Heart right ventricle (tissue), 16 donors: ENCODE measurements at regions of chr13 and their contacts with region 1.

Region 1: DNA sequence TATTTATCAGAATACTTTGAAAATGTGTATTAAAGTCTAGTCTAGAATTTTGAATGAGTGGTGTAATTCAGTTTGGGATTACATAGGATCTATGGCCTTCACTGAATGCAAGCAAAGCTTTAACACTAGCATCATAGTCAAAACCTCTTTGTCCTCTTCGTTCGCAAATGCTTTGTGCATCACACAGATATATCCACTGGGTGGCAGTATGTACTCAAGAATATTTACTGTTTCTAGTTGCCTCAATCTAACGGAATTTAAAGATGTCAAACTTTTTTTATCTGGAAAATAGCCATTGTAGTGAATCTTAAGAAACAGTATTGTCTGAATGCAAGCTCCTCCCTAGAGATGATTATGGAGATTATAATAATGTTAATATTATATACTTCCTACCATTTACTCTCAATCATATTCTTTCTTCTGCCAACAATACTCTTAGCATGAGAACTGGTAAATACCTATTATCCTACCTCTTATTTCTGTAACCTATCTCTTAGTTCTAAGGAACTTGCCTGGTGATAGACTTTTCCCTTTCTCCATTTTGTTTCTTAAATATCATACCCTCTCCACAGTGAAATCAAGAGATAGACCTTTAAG is 25.8 kb downstream of the LACC1 start:
- DNase-seq: peak in 1 of 2 donors; percentile 42
- ATAC-seq: peak in 6 of 8 donors; percentile 63 to 78 (median 68)
- H3K4me3 ChIP-seq: no peak overlapping the region
- H3K27ac ChIP-seq: no peak overlapping the region
- H3K4me1 ChIP-seq: peaks cover 0 to 17% (median 5%) of the 10 kb centered on the region in 9 donors
- H3K27me3 ChIP-seq: peaks cover 0 to 18% (median 0%) of the 10 kb centered on the region in 7 donors
- CTCF ChIP-seq: peak; percentile 65 to 90 (median 81)

Region 2: GRCh38 chr13:43953370-43953769 is 47.8 kb after region 1 on chr13:
- intact Hi-C with region 1: no loop called
- DNase-seq: no peak
- ATAC-seq: no peak
- H3K4me3 ChIP-seq: no peak overlapping the region
- H3K27ac ChIP-seq: no peak overlapping the region
- H3K4me1 ChIP-seq: peaks cover 0 to 9% (median 0%) of the 10 kb centered on the region in 9 donors
- H3K27me3 ChIP-seq: peaks cover 0 to 16% (median 0%) of the 10 kb centered on the region in 7 donors
- CTCF ChIP-seq: no peak

Region 3: GRCh38 chr13:43986421-43986981 is 81.0 kb after region 1 on chr13:
- intact Hi-C with region 1: loop called in 4 of 10 experiments (anchors 2 to 5 kb)
- DNase-seq: peak in 1 of 2 donors; percentile 16
- ATAC-seq: peak; percentile 71 to 96 (median 90)
- H3K4me3 ChIP-seq: no peak overlapping the region
- H3K27ac ChIP-seq: peak overlapping the region; percentile 24 to 82 (median 73)
- H3K4me1 ChIP-seq: peaks cover 0 to 41% (median 18%) of the 10 kb centered on the region in 9 donors
- H3K27me3 ChIP-seq: no peaks in the 10 kb centered on the region
- CTCF ChIP-seq: peak in 4 of 9 donors; percentile 8 to 44 (median 26)

Region 4: DNA sequence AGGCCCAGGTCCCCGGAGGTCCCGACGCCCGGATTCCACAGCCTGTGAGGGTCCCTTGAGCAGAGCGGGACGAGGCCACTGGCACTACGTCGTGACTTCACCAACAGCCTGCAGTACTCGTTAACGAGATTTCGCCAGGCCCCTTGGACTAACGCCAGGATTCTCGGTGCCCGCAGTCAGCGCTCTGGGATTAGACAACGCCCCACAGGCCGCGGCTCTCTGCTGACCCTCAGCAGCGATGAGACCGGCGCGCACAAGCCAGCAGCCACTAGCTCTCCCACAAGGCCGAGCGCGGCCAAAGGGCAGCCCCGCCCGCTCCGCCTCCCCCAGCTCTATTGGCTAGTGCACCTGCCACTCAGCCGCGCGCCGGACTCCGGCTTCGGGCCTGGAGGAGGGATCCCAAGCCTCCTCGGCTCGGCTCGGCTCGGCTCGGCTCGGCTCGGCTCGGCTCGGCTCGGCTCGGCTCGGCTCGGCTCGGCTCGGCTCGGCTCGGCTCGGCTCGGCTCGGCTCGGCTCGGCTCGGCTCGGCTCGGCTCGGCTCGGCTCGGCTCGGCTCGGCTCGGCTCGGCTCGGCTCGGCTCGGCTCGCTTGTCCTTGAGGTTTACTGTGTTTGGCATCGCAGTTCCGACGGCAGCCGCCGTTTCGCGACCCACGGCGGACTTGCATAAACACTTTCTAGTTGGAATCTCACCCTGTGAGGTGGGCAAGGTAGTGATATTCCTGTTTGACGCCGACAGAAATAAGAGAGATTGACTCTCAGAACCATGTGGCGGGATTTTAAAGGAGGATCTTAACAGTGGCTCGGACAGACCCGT is 236.4 kb after region 1 on chr13:
- intact Hi-C with region 1: loop called in 3 of 10 experiments (anchors 5 kb)
- DNase-seq: peak; percentile 98 to 99
- ATAC-seq: peak; percentile 99 to 100 (median 100)
- H3K4me3 ChIP-seq: peak overlapping the region; percentile 50 to 79 (median 58)
- H3K27ac ChIP-seq: peak overlapping the region; percentile 91 to 99 (median 96)
- H3K4me1 ChIP-seq: peaks cover 5 to 22% (median 10%) of the 10 kb centered on the region in 9 donors
- H3K27me3 ChIP-seq: no peaks in the 10 kb centered on the region
- CTCF ChIP-seq: peak in 2 of 9 donors; percentile 9 to 21

Region 5: GRCh38 chr13:44243198-44243857 is 337.8 kb after region 1 on chr13:
- intact Hi-C with region 1: loop called in 1 of 10 experiments (anchors 5 kb)
- DNase-seq: peak in 1 of 2 donors; percentile 57
- ATAC-seq: peak; percentile 60 to 94 (median 74)
- H3K4me3 ChIP-seq: no peak overlapping the region
- H3K27ac ChIP-seq: peak overlapping the region in 8 of 10 donors; percentile 11 to 69 (median 50)
- H3K4me1 ChIP-seq: peaks cover under 1 to 22% (median 4%) of the 10 kb centered on the region in 9 donors
- H3K27me3 ChIP-seq: no peaks in the 10 kb centered on the region
- CTCF ChIP-seq: peak in 8 of 9 donors; percentile 17 to 69 (median 56)

Region 6: DNA sequence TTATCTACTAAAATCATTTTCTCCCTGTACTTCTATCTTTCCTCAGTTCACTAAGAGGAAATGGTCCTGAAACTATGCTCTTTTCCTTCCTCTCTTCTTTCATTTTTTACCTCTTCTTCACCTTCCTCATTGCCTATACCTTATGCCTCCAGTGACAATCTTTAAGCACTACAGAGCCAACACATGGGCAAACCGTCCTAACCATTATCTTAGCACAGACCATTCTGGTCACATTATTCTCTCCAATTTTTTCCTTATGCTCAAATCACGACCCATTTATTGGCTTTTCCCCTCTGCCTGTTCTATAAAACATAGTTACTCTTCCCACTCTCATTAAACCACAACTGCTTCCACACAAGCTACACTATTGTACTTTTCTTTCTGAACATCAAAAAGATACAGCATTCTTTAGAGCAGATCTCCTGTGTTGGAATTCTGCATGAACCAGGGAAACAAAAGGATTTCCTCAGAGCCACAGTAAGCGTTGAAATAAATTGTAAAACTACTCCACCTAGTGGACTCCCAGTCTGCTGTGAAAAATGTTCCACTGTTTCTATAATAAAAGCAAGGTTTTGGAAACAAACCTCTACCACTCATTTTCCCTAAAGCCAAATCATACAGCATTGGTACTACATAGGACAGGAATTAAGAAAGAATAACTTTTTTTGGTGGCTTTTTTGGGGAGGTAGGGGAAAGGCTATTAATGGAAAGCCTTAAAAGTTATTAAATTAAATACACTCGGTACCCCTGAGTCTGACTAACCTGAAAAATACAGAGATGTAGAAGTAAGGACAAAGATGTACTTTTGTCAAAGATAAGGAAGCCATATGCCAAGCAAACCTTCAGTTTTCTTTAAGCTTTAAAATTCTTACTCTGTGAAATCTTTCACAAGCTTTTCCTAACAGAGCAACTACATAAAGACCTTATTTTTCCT is 1064.3 kb after region 1 on chr13:
- intact Hi-C with region 1: loop called in 4 of 10 experiments (anchors 5 to 10 kb)
- DNase-seq: peak in 1 of 2 donors; percentile 22
- ATAC-seq: peak in 6 of 8 donors; percentile 56 to 79 (median 72)
- H3K4me3 ChIP-seq: no peak overlapping the region
- H3K27ac ChIP-seq: no peak overlapping the region
- H3K4me1 ChIP-seq: peaks cover 0 to 29% (median 7%) of the 10 kb centered on the region in 9 donors
- H3K27me3 ChIP-seq: no peaks in the 10 kb centered on the region
- CTCF ChIP-seq: peak; percentile 62 to 89 (median 81)